Right lobe of liver (tissue), 6 donors: ENCODE measurements at regions of chr18 and their contacts with region 1.

Region 1: GRCh38 chr18:830315-830901 is 18.4 kb upstream of the YES1 start:
- DNase-seq: no peak
- ATAC-seq: peak; percentile 23 to 58 (median 40)
- H3K4me3 ChIP-seq: no peak overlapping the region
- H3K27ac ChIP-seq: peak overlapping the region in 2 of 3 donors; percentile 28 to 42
- H3K4me1 ChIP-seq: peaks cover 0 to 9% (median 3%) of the 10 kb centered on the region in 4 donors
- H3K27me3 ChIP-seq: no peaks in the 10 kb centered on the region
- CTCF ChIP-seq: no peak
- POLR2A ChIP-seq: no peak

Region 2: DNA sequence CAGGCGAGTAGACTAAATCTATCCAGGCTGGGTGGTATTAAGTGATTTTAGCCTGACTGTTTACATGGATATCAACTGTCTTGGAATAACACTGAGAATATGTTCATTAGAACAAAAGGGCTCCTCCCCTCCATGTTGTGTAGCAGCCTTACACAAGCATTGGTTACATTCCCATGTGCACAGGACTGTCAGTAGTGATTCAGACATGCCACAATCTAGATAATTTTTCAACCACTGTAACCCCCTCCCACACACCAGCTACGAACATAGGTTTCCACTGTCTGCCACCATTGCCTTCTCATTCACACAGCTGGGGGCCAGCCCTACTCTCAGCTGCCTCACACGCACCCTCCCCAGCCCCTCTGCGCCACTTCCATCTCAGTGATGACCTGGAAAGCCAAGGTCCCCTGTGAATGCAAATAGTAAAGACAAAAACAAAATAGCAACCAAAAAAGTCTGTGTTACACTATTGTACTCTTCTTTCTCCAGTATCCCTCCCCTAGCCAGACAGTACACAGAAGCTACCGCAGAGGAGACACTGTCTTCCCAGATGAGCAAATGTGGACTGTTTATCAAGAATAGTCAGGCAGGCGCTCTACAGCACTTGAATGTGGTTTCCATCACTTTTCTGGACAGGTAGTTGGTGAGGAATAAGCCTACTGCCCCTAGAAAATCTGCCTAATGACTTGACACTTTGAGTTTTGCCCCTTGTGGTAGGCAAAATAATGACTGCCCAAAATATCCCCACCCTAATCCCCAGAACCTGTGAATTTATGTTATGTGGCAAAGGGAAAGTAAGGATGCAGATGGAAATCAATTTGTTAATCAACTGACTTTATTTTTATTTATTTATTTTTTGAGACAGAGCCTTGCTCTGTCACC is 200.9 kb before region 1 on chr18:
- intact Hi-C with region 1: loop called in 1 of 2 experiments (anchors 5 kb)
- DNase-seq: no peak
- ATAC-seq: no peak
- H3K4me3 ChIP-seq: no peak overlapping the region
- H3K27ac ChIP-seq: no peak overlapping the region
- H3K4me1 ChIP-seq: no peaks in the 10 kb centered on the region
- H3K27me3 ChIP-seq: no peaks in the 10 kb centered on the region
- CTCF ChIP-seq: no peak
- POLR2A ChIP-seq: no peak

Region 3: DNA sequence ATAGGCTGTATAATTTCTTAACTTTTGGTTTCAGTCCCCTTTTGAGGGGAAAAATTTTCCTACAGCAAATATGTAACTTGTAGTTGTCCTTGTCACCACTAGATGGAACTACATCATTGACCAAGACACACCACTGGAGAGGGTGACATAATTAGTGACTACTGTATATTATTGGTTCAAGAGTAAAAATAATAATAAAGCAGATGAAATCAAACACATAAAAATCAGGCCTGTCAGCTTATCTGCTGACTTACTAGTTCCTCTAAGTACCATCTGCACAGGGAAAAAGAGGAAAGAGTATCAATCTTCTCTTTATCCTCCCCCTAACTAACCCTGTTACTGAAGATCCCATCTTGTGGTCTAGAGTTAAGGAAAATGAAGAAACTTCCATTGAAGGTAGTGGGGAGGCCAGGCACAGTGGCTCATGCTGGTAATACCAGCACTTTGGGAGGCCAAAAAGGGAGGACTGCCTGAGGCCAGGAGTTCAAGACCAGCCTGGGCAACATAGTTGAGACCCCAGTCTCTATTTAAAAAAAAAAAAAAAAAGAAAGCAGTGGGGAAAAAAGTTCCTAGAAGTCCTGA is 88.4 kb before region 1 on chr18:
- intact Hi-C with region 1: loop called (anchors 5 to 10 kb)
- DNase-seq: no peak
- ATAC-seq: peak; percentile 85 to 93 (median 89)
- H3K4me3 ChIP-seq: no peak overlapping the region
- H3K27ac ChIP-seq: no peak overlapping the region
- H3K4me1 ChIP-seq: no peaks in the 10 kb centered on the region
- H3K27me3 ChIP-seq: no peaks in the 10 kb centered on the region
- CTCF ChIP-seq: peak; percentile 70 to 86 (median 75)
- POLR2A ChIP-seq: no peak

Region 4: GRCh38 chr18:778194-778927 is 52.0 kb before region 1 on chr18:
- intact Hi-C with region 1: no loop called
- DNase-seq: no peak
- ATAC-seq: no peak
- H3K4me3 ChIP-seq: no peak overlapping the region
- H3K27ac ChIP-seq: no peak overlapping the region
- H3K4me1 ChIP-seq: peaks cover 0 to 8% (median 3%) of the 10 kb centered on the region in 4 donors
- H3K27me3 ChIP-seq: no peaks in the 10 kb centered on the region
- CTCF ChIP-seq: no peak
- POLR2A ChIP-seq: no peak

Region 5: GRCh38 chr18:1018181-1018681 is 187.8 kb after region 1 on chr18:
- intact Hi-C with region 1: no loop called
- DNase-seq: no peak
- ATAC-seq: no peak
- H3K4me3 ChIP-seq: no peak overlapping the region
- H3K27ac ChIP-seq: no peak overlapping the region
- H3K4me1 ChIP-seq: no peaks in the 10 kb centered on the region
- H3K27me3 ChIP-seq: no peaks in the 10 kb centered on the region
- CTCF ChIP-seq: no peak
- POLR2A ChIP-seq: no peak